Posterior cingulate gyrus (tissue), 11 donors: ENCODE measurements at regions of chr4 and their contacts with region 1.

Region 1: GRCh38 chr4:139651282-139652194 is 14.1 kb upstream of the MGST2 start:
- DNase-seq: peak; percentile 64 to 97 (median 84)

Region 2: GRCh38 chr4:139030614-139031235 is 620.8 kb before region 1 on chr4:
- intact Hi-C with region 1: loop called (anchors 10 kb)
- DNase-seq: peak in 7 of 10 donors; percentile 44 to 93 (median 76)

Region 3: DNA sequence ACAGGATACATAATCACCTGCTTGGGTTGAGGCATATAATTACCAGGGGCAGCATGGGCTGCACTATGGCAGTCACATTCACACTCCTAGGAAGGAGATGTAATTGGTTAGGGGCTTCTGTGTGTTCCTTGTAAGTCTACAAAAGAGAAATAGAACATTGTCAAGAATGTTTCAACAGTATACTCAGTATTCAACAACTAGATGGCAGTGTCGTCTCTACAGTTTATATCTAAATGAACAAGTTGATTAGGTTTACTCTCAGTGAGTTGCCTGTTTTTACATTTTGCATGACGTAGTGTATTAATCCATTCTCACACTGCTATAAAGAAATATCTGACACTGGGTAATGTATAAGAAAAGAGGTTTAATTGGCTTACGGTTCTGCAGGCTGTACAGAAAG is 248.1 kb before region 1 on chr4:
- intact Hi-C with region 1: loop called (anchors 10 kb)
- DNase-seq: no peak

Region 4: GRCh38 chr4:139603576-139604387 is 47.8 kb before region 1 on chr4:
- intact Hi-C with region 1: loop called (anchors 1 kb)
- DNase-seq: peak in 2 of 10 donors; percentile 26 to 53

Region 5: DNA sequence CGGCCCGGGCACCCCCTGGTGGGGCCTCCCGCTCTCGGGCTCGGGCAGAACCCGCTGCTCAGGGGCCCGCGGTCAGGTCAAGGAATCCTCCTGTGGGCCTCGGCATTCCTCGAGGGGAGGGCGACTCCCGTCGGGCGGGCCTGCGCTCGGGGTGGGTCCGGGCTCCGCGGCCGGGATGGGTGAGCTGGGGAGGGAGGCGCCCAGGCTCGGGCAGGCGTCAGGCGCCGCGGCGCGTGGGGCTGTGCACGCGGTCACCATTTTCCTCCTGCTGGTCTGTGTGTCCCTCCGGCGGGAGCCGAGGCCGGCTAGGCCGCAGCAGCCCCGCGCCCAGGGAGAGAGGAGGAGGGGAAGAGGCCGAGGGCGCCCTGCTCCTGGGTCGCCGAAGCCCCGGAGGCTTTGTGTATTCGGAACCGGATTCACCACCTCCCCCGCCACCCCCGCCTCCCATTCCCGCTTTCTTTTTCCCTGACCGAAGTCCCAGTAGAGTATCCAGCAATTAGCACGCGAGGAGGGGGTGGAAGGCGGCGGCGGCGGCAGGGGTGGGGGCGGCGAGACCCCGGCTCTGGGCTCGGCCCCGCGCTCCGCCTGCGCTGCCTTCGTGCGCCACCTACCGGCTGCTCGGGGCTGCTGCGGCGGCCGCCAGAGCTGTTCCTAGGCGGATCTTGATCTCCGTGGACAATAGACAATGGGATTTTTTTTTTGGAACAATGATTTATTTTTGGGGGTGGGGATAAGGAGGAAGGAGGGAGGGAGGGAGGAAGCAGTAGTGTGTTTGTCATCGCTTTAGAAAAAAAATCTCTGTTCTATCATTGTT is 601.4 kb after region 1 on chr4:
- intact Hi-C with region 1: loop called (anchors 10 kb)
- DNase-seq: peak; percentile 65 to 97 (median 78)

Region 6: DNA sequence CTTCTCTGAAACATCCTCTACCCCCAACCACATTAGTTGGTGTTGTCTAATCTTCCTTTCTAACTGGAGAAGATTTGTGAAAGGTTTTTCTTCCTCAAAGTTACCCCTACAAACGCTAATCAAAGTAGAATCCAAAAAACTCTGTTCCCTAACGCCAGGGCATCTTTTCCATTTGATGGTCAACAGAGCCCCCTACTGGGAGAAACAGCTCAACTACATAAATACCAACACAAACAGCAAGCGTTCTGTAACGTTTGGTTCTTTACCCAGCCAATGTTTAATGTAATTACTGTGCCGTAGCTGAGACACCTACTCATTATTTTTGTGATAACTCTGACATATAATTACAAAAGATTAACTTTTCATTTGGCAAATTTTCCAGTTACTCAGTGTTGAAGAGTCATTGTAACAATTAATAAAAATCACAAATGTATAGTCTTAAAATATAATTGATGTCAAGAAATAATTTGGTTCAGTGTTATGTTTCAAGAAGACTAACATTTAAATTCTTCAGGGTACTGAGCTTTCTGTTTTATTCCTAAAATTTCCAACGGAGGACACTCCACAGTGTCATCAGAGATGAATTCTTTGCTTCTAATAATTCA is 1199.6 kb after region 1 on chr4:
- intact Hi-C with region 1: loop called (anchors 10 kb)
- DNase-seq: peak in 3 of 10 donors; percentile 19 to 37 (median 35)